GM23248 (cell line): ENCODE measurements at regions of chr19 and their contacts with region 1.

Region 1: GRCh38 chr19:33778089-33778791 is 18.4 kb upstream of the KCTD15 start:
- DNase-seq: peak; percentile 85
- H3K4me3 ChIP-seq: no peak overlapping the region
- H3K27ac ChIP-seq: no peak overlapping the region
- H3K4me1 ChIP-seq: peaks cover 15% of the 10 kb centered on the region
- H3K27me3 ChIP-seq: peaks cover 19% of the 10 kb centered on the region; the same call in 1 of the 2 replicates

Region 2: GRCh38 chr19:33998739-33999345 is 220.6 kb after region 1 on chr19:
- in situ Hi-C with region 1: loop called (anchors 5 kb)
- DNase-seq: peak; percentile 44
- H3K4me3 ChIP-seq: no peak overlapping the region
- H3K27ac ChIP-seq: no peak overlapping the region
- H3K4me1 ChIP-seq: no peaks in the 10 kb centered on the region
- H3K27me3 ChIP-seq: peaks cover 21% of the 10 kb centered on the region

Region 3: DNA sequence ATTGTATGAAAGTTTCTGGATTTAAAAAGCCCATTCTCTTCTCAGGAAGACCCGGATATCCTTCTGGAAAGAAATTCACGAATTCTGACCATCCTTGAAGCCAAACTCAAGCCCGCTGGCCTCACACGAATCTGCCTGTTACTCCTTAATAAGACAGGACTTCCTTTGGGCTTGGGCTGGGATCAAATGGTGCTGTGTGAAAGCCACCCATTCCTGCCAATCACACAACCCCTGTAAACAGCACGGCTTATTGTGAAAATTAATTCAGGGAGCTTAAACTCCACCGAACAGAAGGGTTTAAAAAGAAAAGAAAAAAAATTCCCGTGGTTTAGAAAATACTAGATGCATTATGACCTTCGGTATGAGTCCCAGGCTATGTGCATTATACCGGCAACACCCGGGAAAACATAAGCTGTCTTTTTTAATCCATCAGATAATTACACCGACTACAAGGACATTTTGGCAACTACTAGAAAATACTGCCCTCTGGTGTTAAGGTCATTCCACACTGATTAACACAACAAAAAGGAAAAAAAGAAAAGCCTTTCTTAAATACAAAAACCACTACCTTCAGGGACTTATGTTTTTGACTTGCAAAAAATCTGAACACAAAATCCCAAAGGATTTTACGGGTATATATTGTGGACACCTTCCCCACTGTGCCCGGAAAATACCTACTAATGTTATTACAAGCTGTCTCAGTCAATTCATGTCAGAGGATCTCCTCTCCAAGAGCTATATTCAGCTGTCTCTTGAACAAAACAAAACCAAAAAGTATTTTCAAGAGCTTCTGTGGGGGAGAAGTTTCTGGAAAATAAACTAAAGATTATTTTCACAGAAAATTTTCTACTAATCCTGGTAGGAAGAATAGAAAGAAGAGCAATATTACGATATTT is 318.0 kb after region 1 on chr19:
- in situ Hi-C with region 1: loop called (anchors 10 kb)
- DNase-seq: peak; percentile 65
- H3K4me3 ChIP-seq: no peak overlapping the region
- H3K27ac ChIP-seq: no peak overlapping the region
- H3K4me1 ChIP-seq: no peaks in the 10 kb centered on the region
- H3K27me3 ChIP-seq: peaks cover 14% of the 10 kb centered on the region

Region 4: DNA sequence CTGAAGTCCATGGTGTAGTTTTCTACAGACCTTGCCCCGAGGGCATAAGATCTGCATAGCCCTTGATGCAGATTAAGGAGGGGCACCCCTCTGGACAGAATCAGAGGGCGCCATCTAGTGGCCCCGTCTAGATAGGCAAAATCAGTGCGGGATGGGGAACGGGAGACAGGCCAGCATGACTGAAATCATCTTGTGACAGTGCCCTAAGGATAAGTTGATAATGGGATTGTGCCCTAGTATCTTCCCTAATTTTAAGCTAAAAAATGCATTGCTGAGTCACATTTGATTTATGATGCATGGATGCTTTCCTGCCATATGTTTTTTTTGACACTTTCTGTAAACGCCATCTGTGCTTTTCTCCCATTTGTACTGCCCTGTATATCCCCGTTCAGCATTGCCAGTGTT is 567.7 kb after region 1 on chr19:
- in situ Hi-C with region 1: loop called (anchors 25 kb)
- DNase-seq: peak; percentile 88
- H3K4me3 ChIP-seq: no peak overlapping the region
- H3K27ac ChIP-seq: no peak overlapping the region
- H3K4me1 ChIP-seq: no peaks in the 10 kb centered on the region
- H3K27me3 ChIP-seq: no peaks in the 10 kb centered on the region